ENCODE measurements at regions of chr2 and their contacts with region 1.

Region 1: GRCh38 chr2:127437781-127438726 is 19.8 kb downstream of the PROC start:
- DNase-seq: no peak
- H3K4me3 ChIP-seq: no peak overlapping the region
- H3K27ac ChIP-seq: no peak overlapping the region
- H3K4me1 ChIP-seq: no peaks in the 10 kb centered on the region
- H3K27me3 ChIP-seq: no peaks in the 10 kb centered on the region
- CTCF ChIP-seq: no peak

Region 2: DNA sequence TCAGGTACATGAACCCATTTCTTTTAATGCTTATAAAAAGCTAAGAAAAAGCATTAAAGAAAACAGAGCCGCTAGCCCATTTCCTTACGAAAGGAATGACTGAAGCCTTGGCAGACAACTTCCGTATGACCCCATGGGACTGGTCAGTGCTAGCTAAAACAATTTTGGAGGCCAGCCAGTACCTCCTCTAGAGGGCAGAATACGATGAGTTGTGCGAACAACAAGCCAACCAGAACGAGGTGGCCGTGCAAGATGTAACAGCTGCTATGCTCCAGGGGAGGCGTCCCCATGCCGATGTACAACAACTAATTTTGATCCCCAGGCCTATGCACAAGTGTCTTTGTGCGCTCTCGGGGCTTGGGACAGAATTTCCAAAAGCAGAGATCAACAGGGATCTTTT is 67.0 kb before region 1 on chr2:
- CTCF ChIA-PET with region 1: no interaction called
- dilution Hi-C with region 1: loop called (anchors 10 kb)
- in situ Hi-C with region 1: no loop called
- intact Hi-C with region 1: no loop called
- DNase-seq: no peak
- H3K4me3 ChIP-seq: no peak overlapping the region
- H3K27ac ChIP-seq: no peak overlapping the region
- H3K4me1 ChIP-seq: no peaks in the 10 kb centered on the region
- H3K27me3 ChIP-seq: no peaks in the 10 kb centered on the region
- CTCF ChIP-seq: no peak

Region 3: GRCh38 chr2:127735537-127736399 is 297.7 kb after region 1 on chr2:
- CTCF ChIA-PET with region 1: no interaction called
- dilution Hi-C with region 1: no loop called
- in situ Hi-C with region 1: no loop called
- intact Hi-C with region 1: no loop called
- DNase-seq: no peak
- H3K4me3 ChIP-seq: no peak overlapping the region
- H3K27ac ChIP-seq: no peak overlapping the region
- H3K4me1 ChIP-seq: no peaks in the 10 kb centered on the region
- H3K27me3 ChIP-seq: no peaks in the 10 kb centered on the region
- CTCF ChIP-seq: no peak

Region 4: GRCh38 chr2:128037649-128038048 is 599.6 kb after region 1 on chr2:
- CTCF ChIA-PET with region 1: no interaction called
- dilution Hi-C with region 1: no loop called
- in situ Hi-C with region 1: no loop called
- intact Hi-C with region 1: no loop called
- DNase-seq: no peak
- H3K4me3 ChIP-seq: no peak overlapping the region
- H3K27ac ChIP-seq: no peak overlapping the region
- H3K4me1 ChIP-seq: no peaks in the 10 kb centered on the region
- H3K27me3 ChIP-seq: no peaks in the 10 kb centered on the region
- CTCF ChIP-seq: no peak